Activated naive CD4-positive, alpha-beta T cell treated with anti-CD3 and anti-CD28 coated beads, Interleukin-2, amount 10 ng/mL, durations not matched to agents 7 days and 5 days (primary cell): ENCODE measurements at regions of chr1 and their contacts with region 1.

Region 1: DNA sequence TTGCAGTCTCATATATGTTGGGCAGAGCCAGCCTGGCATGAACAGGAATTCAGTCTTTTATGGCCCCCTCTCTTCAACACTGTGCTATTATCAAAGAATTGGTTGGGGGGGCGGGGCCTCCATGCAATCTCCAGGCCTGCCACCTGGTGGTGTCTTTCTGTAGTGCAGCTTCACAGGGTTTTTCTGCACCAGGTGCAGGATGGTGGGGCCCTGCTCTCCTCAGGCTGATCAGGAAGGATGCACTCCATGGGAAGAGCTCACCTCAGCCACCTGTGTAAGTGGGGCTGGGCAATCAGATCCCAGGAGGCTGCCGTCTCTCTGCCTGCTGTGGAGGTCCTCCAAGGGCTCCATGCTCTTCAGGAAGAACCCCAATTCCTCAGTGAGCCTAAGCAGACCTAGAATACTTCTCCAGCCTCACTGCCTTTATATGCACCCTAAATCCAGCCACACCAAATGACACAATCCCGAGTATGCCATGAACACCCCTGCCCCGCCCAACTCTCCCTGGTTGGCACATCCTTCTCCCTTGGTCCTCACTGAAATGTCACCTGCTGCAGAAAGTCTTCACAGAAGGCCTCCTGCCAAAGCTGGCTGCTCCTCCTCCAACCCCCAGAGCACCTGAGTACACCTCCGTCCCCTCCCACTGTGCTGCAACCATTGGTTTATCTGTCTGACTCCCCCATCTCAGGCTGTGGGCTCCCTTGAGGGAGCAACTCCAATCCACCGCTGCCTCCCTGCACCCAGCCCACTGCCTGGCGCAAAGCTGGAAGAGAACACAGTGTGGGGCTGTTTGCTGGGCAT is 16.5 kb downstream of the STK40 start:
- DNase-seq: peak; percentile 89
- H3K4me3 Mint-ChIP-seq: no peak overlapping the region
- H3K27ac Mint-ChIP-seq: peak overlapping the region; percentile 96
- H3K4me1 Mint-ChIP-seq: peaks cover 78% of the 10 kb centered on the region
- H3K27me3 Mint-ChIP-seq: no peaks in the 10 kb centered on the region

Region 2: DNA sequence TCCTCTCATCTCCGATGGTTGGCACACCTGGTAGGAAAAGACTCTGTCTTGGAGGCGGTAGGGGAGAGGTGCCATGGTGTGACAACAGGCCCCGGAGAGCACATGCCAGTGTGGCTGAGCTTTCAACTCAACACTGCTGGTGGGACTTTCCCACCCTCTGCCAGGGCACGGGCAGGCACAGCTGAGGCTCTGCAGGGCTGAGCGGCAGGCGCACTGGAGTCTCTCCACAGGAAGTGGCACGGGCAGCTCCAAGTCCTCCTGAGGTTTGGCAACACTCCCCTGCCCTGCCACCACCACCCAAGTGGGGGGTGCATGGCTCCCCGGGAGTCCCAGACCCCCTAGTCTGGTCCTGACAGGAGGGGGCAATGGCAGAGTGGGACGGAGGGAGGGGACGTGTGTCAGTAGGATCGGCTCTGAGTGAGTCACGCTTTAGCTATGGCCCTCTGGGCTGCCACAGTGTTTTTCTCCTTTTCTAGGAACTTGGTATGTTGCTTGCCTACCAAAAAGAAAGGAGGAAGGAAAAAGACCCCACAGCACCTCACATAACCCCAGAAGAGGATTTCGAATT is 18.5 kb before region 1 on chr1:
- CTCF ChIA-PET with region 1: interaction called, 83 read pairs
- DNase-seq: peak; percentile 59
- H3K4me3 Mint-ChIP-seq: no peak overlapping the region
- H3K27ac Mint-ChIP-seq: peak overlapping the region; percentile 73
- H3K4me1 Mint-ChIP-seq: peaks cover 32% of the 10 kb centered on the region
- H3K27me3 Mint-ChIP-seq: no peaks in the 10 kb centered on the region

Region 3: DNA sequence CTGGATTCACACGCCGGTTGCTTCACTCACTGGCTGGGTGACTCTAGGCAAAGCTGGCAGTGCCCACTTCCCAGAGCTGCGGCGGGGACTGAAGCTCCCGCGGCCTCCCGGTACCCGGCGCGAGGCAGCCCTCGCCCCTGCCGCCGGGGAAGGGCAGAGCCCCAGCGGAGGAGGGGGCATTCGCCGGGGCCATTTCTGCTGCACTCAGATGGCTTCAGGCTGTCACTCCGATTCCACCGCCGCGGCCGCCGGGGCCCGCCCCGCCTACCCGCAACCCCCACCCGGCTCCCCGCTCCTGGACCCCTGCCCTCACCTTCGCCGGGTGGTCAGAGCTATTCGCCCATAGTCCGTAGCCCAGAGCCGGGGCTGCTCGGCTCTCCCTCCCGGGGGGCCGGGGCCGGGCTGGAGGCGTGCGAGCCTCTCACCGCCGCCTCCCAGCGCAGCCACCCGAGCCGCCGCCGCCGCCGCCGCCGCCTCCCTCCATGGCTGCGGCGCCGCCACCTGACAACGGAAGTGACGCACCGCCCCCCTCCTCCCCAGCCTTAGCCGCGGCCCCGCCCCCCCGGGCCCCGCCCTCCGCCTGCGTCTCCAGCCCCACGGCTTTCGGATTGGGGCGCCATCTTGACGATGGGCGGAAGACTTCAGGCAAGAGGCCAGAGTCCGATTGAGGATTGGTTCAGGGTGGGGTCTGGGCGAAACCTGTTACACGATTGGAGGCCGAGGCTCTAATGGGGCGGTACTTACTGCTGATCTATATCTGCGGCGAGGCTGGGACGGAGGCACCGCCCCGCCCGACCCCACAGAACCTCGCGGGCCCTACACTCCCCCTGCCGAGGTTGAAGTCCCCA is 16.4 kb after region 1 on chr1 and contains the start of gene STK40:
- CTCF ChIA-PET with region 1: interaction called, 36 read pairs
- DNase-seq: peak; percentile 98
- H3K4me3 Mint-ChIP-seq: peak within 1 kb of the TSS; percentile 75
- H3K27ac Mint-ChIP-seq: peak within 1 kb of the TSS; percentile 100
- H3K4me1 Mint-ChIP-seq: peaks cover 59% of the 10 kb centered on the region
- H3K27me3 Mint-ChIP-seq: no peaks in the 10 kb centered on the region

Region 4: DNA sequence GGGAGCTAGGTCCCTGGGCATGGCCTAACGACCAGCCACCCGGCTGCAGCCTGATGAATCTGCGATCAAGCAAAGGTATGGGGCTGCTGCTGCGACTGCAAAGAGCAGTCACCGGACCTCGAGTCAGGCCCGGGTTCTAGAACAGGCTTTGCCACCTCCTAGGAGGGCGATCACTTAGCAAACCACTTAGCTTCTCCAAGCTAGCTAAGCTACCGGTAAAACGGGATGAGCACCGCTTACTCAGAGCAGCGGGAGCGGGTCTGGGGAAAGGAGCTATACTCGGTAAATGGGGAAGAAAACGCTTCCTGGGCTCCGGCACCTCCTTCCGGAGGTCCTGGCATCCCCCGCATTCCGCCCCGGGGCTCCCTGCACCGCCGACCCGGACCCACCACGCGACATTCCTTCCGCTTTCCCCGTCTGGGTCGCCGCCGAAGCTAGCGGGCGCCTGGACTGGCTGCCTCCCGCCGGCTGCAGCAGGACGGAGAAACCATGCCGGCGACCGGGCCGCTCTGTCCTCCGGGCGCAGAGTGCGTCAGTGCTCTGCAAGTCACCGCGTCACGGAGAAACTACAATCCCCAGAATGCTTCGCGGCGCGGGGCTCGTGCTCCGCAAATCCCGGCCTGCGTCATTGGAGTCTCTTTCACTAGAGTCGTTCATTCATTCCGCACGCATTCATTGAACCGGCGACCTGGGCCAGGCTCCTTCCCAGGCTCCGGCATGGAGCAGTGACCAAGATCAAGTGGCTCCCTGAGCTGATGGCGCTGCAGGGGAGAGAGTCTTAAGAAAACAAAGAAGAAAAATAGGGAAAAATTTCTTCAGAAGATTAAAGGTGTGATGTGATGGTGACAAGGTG is 28.3 kb after region 1 on chr1 and contains the start of gene LSM10:
- CTCF ChIA-PET with region 1: interaction called, 14 read pairs
- DNase-seq: peak; percentile 95
- H3K4me3 Mint-ChIP-seq: peak within 1 kb of the TSS; percentile 96
- H3K27ac Mint-ChIP-seq: peak within 1 kb of the TSS; percentile 95
- H3K4me1 Mint-ChIP-seq: peaks cover 36% of the 10 kb centered on the region
- H3K27me3 Mint-ChIP-seq: no peaks in the 10 kb centered on the region

Region 5: DNA sequence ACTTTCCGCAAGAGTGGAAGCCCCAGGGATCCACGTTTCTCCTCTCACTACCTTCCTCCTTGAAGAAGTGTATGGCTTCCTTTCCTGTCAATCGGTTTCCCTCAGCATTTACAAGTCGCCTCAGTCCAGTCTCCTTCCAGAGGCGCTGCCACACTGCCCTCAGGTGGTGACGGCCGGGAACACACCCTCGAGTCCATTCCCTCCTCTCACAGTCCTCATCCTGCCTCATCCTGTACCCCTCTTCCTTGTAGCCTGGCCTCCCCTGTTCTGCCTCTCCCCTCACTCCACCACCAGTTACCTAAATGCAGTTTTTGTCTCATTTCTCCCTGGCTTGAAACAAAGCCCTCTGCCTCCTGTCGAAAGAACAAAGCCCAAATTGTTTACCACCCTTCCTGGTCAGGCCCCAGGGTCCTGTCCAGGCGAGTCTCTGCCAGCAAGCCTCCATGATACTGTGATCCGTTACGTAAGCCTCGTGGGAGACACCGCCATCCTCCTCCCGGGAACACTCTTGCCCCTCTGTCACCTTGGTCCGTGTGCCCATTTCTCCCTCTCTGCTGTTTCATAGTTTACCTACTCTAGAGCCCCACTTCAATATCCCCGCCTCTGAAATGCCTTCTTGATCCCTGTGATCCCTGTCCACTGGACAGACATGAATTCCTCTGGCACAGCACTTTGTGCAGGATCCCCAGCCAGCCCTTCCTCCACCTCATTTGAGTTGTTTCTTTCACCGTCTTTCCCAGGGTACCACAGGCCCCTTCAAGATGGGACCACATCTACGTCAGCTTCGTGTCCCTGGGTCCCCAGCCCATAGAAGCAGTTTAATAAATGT is 51.8 kb after region 1 on chr1:
- CTCF ChIA-PET with region 1: interaction called, 15 read pairs
- DNase-seq: peak; percentile 94
- H3K4me3 Mint-ChIP-seq: peak overlapping the region; percentile 44
- H3K27ac Mint-ChIP-seq: peak overlapping the region; percentile 67
- H3K4me1 Mint-ChIP-seq: peaks cover 18% of the 10 kb centered on the region
- H3K27me3 Mint-ChIP-seq: peaks cover 4% of the 10 kb centered on the region